BJ (cell line): ENCODE measurements at regions of chr2 and their contacts with region 1.

Region 1: GRCh38 chr2:207854484-207855440 is 85.1 kb upstream of the FZD5 start:
- DNase-seq: peak; percentile 24
- H3K4me3 ChIP-seq: no peak overlapping the region
- H3K27me3 ChIP-seq: no peaks in the 10 kb centered on the region
- CTCF ChIP-seq: no peak

Region 2: GRCh38 chr2:207819839-207820784 is 34.6 kb before region 1 on chr2:
- CTCF ChIA-PET with region 1: no interaction called
- POLR2A ChIA-PET with region 1: interaction called, 10 read pairs
- DNase-seq: no peak
- H3K4me3 ChIP-seq: no peak overlapping the region
- H3K27me3 ChIP-seq: no peaks in the 10 kb centered on the region
- CTCF ChIP-seq: no peak